Heart left ventricle (tissue), 16 donors: ENCODE measurements at regions of chr5 and their contacts with region 1.

Region 1: DNA sequence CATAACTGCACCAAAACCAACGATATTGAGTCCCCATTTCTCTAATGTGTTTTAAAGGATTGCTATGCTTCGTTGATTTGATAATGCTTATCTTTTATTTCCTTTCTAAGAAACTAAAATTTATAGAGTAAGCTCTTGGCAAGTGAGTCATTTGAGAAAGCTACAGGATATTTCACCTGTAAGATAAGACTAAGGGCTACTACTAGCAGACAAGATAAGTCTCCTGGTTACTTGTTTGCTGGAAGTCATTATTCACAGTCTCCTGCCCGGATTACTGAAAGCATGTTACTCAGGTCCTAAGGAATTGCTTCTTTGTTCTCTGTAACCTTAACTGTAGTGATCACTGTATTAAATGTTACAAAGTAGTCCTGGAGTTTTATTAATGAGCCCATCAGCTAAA is 315.9 kb upstream of the RASA1 start:
- DNase-seq: no peak
- ATAC-seq: no peak
- H3K4me3 ChIP-seq: no peak overlapping the region
- H3K27ac ChIP-seq: no peak overlapping the region
- H3K4me1 ChIP-seq: no peaks in the 10 kb centered on the region
- H3K27me3 ChIP-seq: peaks cover 0 to 4% (median 0%) of the 10 kb centered on the region in 9 donors
- CTCF ChIP-seq: no peak
- POLR2A ChIP-seq: no peak

Region 2: DNA sequence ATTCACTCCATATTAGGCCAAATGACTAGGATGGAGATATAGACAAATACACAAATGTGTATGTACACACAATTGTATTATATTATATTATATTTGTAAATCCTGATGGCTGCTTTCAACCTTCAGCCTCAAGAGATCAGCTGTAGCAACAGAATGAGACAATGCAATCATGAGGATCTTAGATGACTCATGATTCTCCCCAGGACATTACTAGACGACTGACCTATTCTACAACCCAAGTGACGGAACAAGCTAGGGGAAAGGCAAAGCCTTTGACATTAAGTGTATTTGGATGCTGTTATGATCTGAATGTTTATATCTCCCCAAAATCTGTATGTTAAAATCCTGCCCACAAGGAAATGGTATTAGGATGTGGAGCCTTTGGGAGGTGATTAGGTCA is 267.5 kb before region 1 on chr5:
- intact Hi-C with region 1: loop called in 1 of 10 experiments (anchors 5 kb)
- DNase-seq: no peak
- ATAC-seq: peak in 1 of 4 donors; percentile 54
- H3K4me3 ChIP-seq: no peak overlapping the region
- H3K27ac ChIP-seq: no peak overlapping the region
- H3K4me1 ChIP-seq: peaks cover 0 to 2% (median 0%) of the 10 kb centered on the region in 12 donors
- H3K27me3 ChIP-seq: no peaks in the 10 kb centered on the region
- CTCF ChIP-seq: no peak
- POLR2A ChIP-seq: no peak

Region 3: GRCh38 chr5:87034557-87034956 is 82.8 kb after region 1 on chr5:
- intact Hi-C with region 1: no loop called
- DNase-seq: no peak
- ATAC-seq: no peak
- H3K4me3 ChIP-seq: no peak overlapping the region
- H3K27ac ChIP-seq: no peak overlapping the region
- H3K4me1 ChIP-seq: no peaks in the 10 kb centered on the region
- H3K27me3 ChIP-seq: no peaks in the 10 kb centered on the region
- CTCF ChIP-seq: no peak
- POLR2A ChIP-seq: no peak